ENCODE measurements at regions of chr3 and their contacts with region 1.

Region 1: DNA sequence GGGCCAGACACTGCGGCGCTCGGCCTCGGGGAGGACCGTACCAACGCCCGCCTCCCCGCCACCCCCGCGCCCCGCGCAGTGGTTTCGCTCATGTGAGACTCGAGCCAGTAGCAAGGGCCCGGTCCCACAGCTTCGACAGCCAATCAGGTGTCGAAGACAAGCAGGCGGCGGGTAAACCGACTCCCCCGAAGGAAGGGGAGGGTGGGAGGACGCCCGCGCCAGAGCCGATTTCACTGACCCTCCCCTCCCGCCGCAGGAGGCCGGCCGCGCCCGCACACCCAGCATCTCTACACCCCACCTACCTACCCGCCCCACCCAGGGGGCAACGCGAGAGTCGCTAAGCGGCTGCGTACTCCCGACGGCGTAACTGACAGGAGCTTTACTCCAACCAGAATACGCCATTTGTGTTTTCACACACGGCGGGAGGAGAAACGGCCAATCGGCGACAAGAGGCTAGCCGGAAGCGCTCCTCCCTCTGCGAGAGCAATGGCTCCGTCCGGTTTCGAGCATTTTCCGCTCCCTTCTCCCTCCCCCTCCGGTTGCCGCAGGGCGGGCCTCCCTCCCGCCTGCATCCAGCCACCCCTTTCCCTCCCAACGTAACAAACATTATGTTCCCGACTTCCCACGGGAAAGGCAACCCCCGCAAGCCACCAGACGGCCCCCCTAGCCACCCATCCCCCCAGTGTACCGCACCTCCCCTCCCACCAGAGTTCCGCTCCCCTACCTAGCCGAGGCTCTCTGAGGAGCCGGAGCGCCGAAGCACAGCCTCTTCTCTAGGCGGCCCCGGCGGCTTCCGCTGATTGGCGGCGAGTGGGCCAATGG is 504 bp upstream of the SETD5 start:
- DNase-seq: peak; percentile 98 to 100 (median 99)
- ATAC-seq: peak; percentile 67
- H3K4me3 ChIP-seq: peak overlapping the region; percentile 68 to 73
- H3K4me3 Mint-ChIP-seq: peak overlapping the region; percentile 94
- H3K27ac ChIP-seq: peak overlapping the region; percentile 90 to 97
- H3K27ac Mint-ChIP-seq: peak overlapping the region; percentile 97
- H3K4me1 ChIP-seq: peaks cover 69% of the 10 kb centered on the region
- H3K4me1 Mint-ChIP-seq: peaks cover 72% of the 10 kb centered on the region
- H3K27me3 ChIP-seq: no peaks in the 10 kb centered on the region
- H3K27me3 Mint-ChIP-seq: no peaks in the 10 kb centered on the region
- CTCF ChIP-seq: no peak

Region 2: DNA sequence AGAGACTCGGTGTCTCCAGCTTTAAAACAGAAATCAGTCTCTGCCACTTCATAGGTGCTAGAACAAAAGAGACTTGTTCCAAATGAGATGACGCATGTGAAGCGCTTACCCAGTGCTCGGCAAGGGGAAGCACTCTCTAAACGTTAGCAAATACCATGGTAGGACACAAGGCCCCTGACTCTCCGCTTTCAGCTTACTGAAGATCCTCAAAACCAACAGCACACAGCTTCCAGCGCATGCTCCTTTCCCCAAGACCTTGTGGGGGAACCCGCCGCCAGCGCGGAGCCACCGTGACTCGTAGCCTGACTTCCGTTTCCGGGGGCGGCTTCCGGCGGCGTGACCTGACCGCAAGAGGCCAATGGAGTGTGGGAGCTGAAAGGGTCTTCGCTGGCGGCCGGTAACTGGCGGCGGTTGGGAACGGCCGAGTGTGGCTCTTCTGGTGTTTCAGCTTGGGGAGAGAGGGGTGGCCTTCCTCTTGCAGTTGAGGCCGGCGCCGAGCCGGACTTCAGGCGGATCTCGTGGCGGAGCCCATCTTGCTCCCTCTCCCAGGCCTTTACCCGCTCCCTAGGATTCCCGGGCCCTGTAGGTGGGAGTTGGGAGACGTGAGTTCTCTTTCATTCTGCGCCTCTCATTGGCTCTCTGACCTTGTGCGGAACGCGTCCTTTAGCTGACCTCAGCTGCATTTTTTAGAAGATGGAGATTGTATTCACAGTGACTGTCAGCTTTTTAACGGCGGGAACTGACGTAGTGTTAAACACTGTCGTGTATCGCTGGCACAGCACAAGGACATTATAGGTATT is 34.0 kb before region 1 on chr3 and contains the start of gene THUMPD3:
- CTCF ChIA-PET with region 1: interaction called, 7 read pairs
- POLR2A ChIA-PET with region 1: interaction called, 81 read pairs
- intact Hi-C with region 1: loop called (anchors 1 kb)
- DNase-seq: peak; percentile 82 to 94 (median 92)
- ATAC-seq: peak; percentile 92
- H3K4me3 ChIP-seq: peak within 1 kb of the TSS; percentile 79 to 97
- H3K4me3 Mint-ChIP-seq: peak within 1 kb of the TSS; percentile 96
- H3K27ac ChIP-seq: peak within 1 kb of the TSS; percentile 93 to 97
- H3K27ac Mint-ChIP-seq: peak within 1 kb of the TSS; percentile 99
- H3K4me1 ChIP-seq: peaks cover 19% of the 10 kb centered on the region
- H3K4me1 Mint-ChIP-seq: peaks cover 35% of the 10 kb centered on the region
- H3K27me3 ChIP-seq: no peaks in the 10 kb centered on the region
- H3K27me3 Mint-ChIP-seq: no peaks in the 10 kb centered on the region
- CTCF ChIP-seq: no peak
- total RNA-seq, gene THUMPD3: 84.1 to 84.3 TPM

Region 3: GRCh38 chr3:9384141-9384853 is 12.6 kb before region 1 on chr3:
- CTCF ChIA-PET with region 1: interaction called, 3 read pairs
- POLR2A ChIA-PET with region 1: interaction called, 13 read pairs
- intact Hi-C with region 1: no loop called
- DNase-seq: no peak
- ATAC-seq: no peak
- H3K4me3 ChIP-seq: no peak overlapping the region
- H3K4me3 Mint-ChIP-seq: no peak overlapping the region
- H3K27ac ChIP-seq: no peak overlapping the region
- H3K27ac Mint-ChIP-seq: peak overlapping the region; percentile 37
- H3K4me1 ChIP-seq: peaks cover 4% of the 10 kb centered on the region
- H3K4me1 Mint-ChIP-seq: peaks cover 34% of the 10 kb centered on the region
- H3K27me3 ChIP-seq: no peaks in the 10 kb centered on the region
- H3K27me3 Mint-ChIP-seq: no peaks in the 10 kb centered on the region
- CTCF ChIP-seq: no peak

Region 4: GRCh38 chr3:9422712-9423424 is 26.0 kb after region 1 on chr3:
- CTCF ChIA-PET with region 1: no interaction called
- POLR2A ChIA-PET with region 1: interaction called, 6 read pairs
- intact Hi-C with region 1: loop called (anchors 2 kb)
- DNase-seq: peak in 2 of 9 experiments; percentile 53 to 67
- ATAC-seq: peak; percentile 93
- H3K4me3 ChIP-seq: no peak overlapping the region
- H3K4me3 Mint-ChIP-seq: no peak overlapping the region
- H3K27ac ChIP-seq: peak overlapping the region in 1 of 2 experiments; percentile 38
- H3K27ac Mint-ChIP-seq: peak overlapping the region; percentile 86
- H3K4me1 ChIP-seq: peaks cover 6% of the 10 kb centered on the region
- H3K4me1 Mint-ChIP-seq: peaks cover 54% of the 10 kb centered on the region
- H3K27me3 ChIP-seq: no peaks in the 10 kb centered on the region
- H3K27me3 Mint-ChIP-seq: no peaks in the 10 kb centered on the region
- CTCF ChIP-seq: peak; percentile 73

Region 5: DNA sequence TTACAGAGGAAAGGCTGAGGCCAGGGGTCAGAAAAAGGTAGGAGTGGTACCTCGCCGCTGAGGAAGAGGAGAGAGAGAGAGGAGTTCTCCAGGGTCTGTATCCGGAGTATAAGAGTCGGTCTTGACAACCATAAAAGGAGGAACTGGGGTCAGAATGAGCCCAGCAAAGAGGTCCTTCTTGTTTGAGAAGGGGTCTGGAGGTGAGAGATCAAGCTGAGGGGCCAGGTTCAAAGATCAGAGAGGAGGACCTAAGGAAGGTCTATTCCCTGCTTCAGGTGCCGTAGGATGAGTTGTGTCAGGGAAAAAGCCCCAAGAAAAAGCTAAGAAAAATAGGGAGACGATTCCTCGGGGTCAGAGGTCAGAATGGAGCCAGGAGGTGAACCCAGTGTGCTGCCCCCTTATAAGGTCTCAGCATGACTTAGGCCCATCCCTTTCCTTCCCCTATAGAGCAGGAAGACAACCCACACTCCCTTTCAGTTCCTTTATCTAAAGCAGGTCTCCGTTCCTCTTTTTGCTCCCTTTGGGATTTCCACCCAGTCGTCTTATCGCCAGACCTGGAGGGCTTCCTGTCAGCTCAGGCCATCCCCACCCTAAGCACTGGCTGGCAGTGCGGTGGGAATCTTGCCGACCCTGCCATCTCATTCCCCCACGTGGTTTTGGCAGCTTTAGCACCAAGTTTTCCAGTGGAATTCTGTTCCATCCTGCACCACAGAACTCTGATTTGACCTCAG is 253.0 kb after region 1 on chr3:
- CTCF ChIA-PET with region 1: no interaction called
- POLR2A ChIA-PET with region 1: interaction called, 11 read pairs
- intact Hi-C with region 1: loop called in 1 of 2 experiments (anchors 1 kb)
- DNase-seq: peak in 2 of 9 experiments; percentile 10 to 42
- ATAC-seq: no peak
- H3K4me3 ChIP-seq: peak overlapping the region; percentile 90 to 91
- H3K4me3 Mint-ChIP-seq: peak overlapping the region; percentile 93
- H3K27ac ChIP-seq: peak overlapping the region; percentile 88 to 94
- H3K27ac Mint-ChIP-seq: peak overlapping the region; percentile 97
- H3K4me1 ChIP-seq: peaks cover 27% of the 10 kb centered on the region
- H3K4me1 Mint-ChIP-seq: peaks cover 39% of the 10 kb centered on the region
- H3K27me3 ChIP-seq: no peaks in the 10 kb centered on the region
- H3K27me3 Mint-ChIP-seq: no peaks in the 10 kb centered on the region
- CTCF ChIP-seq: no peak

Region 6: GRCh38 chr3:9792405-9793160 is 395.7 kb after region 1 on chr3 and contains the starts of genes ARPC4 and TADA3:
- CTCF ChIA-PET with region 1: no interaction called
- POLR2A ChIA-PET with region 1: interaction called, 9 read pairs
- intact Hi-C with region 1: loop called (anchors 1 to 2 kb)
- DNase-seq: peak; percentile 82 to 97 (median 92)
- ATAC-seq: peak; percentile 83
- H3K4me3 ChIP-seq: peak within 1 kb of the TSS; percentile 76 to 96
- H3K4me3 Mint-ChIP-seq: peak within 1 kb of the TSS; percentile 94
- H3K27ac ChIP-seq: peak within 1 kb of the TSS; percentile 93 to 98
- H3K27ac Mint-ChIP-seq: peak within 1 kb of the TSS; percentile 98
- H3K4me1 ChIP-seq: peaks cover 48% of the 10 kb centered on the region
- H3K4me1 Mint-ChIP-seq: peaks cover 58% of the 10 kb centered on the region
- H3K27me3 ChIP-seq: no peaks in the 10 kb centered on the region
- H3K27me3 Mint-ChIP-seq: no peaks in the 10 kb centered on the region
- CTCF ChIP-seq: no peak
- total RNA-seq, gene ARPC4: 97.7 to 104 TPM
- total RNA-seq, gene TADA3: 9.5 to 11.0 TPM

Measured in CD8-positive, alpha-beta T cell (primary cell).